IMR-90 (cell line): ENCODE measurements at regions of chr14 and their contacts with region 1.

Region 1: GRCh38 chr14:95993768-95994592 is 45.2 kb upstream of the C14orf132 start:
- DNase-seq: peak; percentile 53
- ATAC-seq: peak; percentile 82
- H3K4me3 ChIP-seq: no peak overlapping the region
- H3K27ac ChIP-seq: no peak overlapping the region
- H3K4me1 ChIP-seq: no peaks in the 10 kb centered on the region
- H3K27me3 ChIP-seq: peaks cover 18% of the 10 kb centered on the region
- CTCF ChIP-seq: peak; percentile 89
- POLR2A ChIP-seq: no peak
- RAD21 ChIP-seq: peak; percentile 88

Region 2: GRCh38 chr14:94689218-94689984 is 1304.6 kb before region 1 on chr14:
- CTCF ChIA-PET with region 1: no interaction called
- POLR2A ChIA-PET with region 1: no interaction called
- dilution Hi-C with region 1: no loop called
- in situ Hi-C with region 1: loop called (anchors 25 kb)
- intact Hi-C with region 1: loop called (anchors 2 kb)
- DNase-seq: peak; percentile 22
- ATAC-seq: peak; percentile 100
- H3K4me3 ChIP-seq: no peak overlapping the region; the same call in 1 of the 2 replicates
- H3K27ac ChIP-seq: no peak overlapping the region
- H3K4me1 ChIP-seq: peaks cover 2% of the 10 kb centered on the region; the same call in 1 of the 2 replicates
- H3K27me3 ChIP-seq: no peaks in the 10 kb centered on the region; the same call in 1 of the 2 replicates
- CTCF ChIP-seq: peak; percentile 92
- POLR2A ChIP-seq: no peak
- RAD21 ChIP-seq: peak; percentile 90

Region 3: DNA sequence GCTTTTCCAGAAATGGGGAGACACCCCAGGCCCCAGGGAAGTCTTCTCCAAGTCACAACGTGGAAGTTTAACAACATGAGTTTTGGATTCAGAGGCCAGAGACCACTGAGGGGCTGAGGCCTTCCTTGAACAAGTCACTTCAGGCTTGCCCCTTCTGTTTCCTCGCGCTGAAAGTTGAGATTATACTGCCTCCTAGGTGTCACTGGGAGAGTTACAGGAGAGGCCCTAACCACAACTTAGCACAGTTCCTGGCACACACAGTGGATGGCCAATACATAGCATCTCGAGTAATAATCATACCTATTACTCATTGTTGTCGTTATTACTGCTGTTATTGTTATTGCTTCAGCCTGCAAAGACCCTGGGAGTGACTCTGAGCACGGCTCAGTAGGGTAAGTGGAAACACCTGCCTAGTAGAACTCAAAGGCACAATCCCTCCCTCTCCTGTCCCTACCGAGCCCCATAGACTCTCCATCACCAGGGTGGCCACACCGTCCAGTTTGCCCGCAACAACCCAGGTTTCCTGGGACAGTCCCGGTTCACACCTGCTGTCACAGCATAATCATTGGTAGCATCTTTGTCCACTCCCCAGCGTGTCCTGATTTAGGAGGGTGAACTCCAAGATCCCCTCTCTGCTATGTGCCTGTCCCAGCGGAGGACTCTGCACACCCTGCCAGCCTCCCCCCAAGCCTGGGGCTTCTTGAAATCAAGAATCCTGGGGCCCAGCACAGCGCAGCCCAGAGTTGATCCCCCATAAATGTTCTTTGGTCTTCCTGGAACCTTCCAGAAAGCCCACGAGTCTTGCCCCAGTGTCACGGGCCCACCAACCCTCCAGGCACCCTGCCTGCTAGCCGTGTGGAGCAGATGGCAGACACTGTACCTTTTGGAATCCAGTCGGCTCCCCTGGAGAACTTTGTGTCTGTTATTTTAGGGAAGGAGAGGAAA is 562.5 kb before region 1 on chr14:
- CTCF ChIA-PET with region 1: no interaction called
- POLR2A ChIA-PET with region 1: no interaction called
- dilution Hi-C with region 1: no loop called
- in situ Hi-C with region 1: loop called (anchors 10 kb)
- intact Hi-C with region 1: loop called (anchors 5 kb)
- DNase-seq: peak; percentile 17
- ATAC-seq: no peak
- H3K4me3 ChIP-seq: no peak overlapping the region
- H3K27ac ChIP-seq: no peak overlapping the region
- H3K4me1 ChIP-seq: no peaks in the 10 kb centered on the region
- H3K27me3 ChIP-seq: no peaks in the 10 kb centered on the region
- CTCF ChIP-seq: peak; percentile 51
- POLR2A ChIP-seq: no peak
- RAD21 ChIP-seq: peak; percentile 37; the same call in 1 of the 2 replicates

Region 4: DNA sequence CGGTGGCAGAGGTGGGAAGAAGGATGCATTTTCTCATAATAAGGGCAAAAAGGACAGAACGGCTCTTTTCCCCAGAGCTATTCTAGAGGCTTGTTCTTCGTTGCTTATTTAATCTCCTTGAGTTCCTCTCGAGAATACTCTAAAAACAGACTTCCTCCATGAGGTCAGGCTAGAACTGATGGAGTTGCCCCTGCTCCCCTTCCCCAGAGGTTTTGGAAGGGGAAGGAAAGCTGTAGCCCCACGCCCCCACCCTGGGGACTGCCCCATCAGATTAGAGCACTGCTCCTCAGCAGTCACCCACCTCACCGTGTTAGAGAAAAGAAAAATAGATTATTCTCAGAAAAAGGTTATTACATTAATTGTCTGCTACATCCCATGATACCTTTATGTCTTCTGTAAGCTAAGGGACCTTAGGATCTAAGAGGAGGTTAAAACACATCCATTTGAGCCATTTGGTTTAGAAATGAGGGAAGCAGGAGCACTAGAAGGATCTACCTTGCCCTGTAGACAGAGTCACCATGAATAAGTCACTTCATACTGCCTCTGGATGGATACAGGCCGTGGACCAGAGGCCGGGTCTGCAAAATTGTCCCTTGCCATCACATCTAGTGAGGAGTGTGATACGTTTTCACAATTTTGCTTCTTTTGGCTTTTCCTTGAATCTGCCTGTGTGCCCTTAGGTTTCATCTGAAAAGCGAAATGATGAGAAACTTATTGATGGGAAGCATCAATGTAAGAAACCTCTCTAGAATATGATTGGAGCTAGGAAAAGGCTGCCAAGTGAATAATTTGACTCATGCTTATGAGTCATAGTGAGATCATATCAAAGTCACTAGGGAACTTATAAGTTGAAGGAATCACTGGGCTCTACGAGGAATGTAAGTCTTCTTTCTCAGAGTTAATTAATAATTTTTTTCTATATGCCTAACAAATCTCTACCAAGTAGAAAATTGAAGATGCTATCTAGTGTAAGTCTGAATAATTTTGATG is 448.5 kb before region 1 on chr14:
- CTCF ChIA-PET with region 1: no interaction called
- POLR2A ChIA-PET with region 1: no interaction called
- dilution Hi-C with region 1: no loop called
- in situ Hi-C with region 1: loop called (anchors 10 kb)
- intact Hi-C with region 1: no loop called
- DNase-seq: peak; percentile 97
- ATAC-seq: peak; percentile 61; the same call in 1 of the 2 replicates
- H3K4me3 ChIP-seq: no peak overlapping the region
- H3K27ac ChIP-seq: no peak overlapping the region
- H3K4me1 ChIP-seq: peaks cover 13% of the 10 kb centered on the region
- H3K27me3 ChIP-seq: no peaks in the 10 kb centered on the region
- CTCF ChIP-seq: no peak
- POLR2A ChIP-seq: no peak
- RAD21 ChIP-seq: no peak

Region 5: GRCh38 chr14:95609387-95609990 is 384.5 kb before region 1 on chr14:
- CTCF ChIA-PET with region 1: no interaction called
- POLR2A ChIA-PET with region 1: no interaction called
- dilution Hi-C with region 1: no loop called
- in situ Hi-C with region 1: no loop called
- intact Hi-C with region 1: loop called (anchors 1 kb)
- DNase-seq: peak; percentile 23
- ATAC-seq: peak; percentile 49
- H3K4me3 ChIP-seq: no peak overlapping the region
- H3K27ac ChIP-seq: no peak overlapping the region
- H3K4me1 ChIP-seq: no peaks in the 10 kb centered on the region
- H3K27me3 ChIP-seq: peaks cover 3% of the 10 kb centered on the region
- CTCF ChIP-seq: peak; percentile 46
- POLR2A ChIP-seq: no peak
- RAD21 ChIP-seq: peak; percentile 48

Region 6: GRCh38 chr14:96275177-96276112 is 281.5 kb after region 1 on chr14:
- CTCF ChIA-PET with region 1: interaction called, 3 read pairs
- POLR2A ChIA-PET with region 1: no interaction called
- dilution Hi-C with region 1: no loop called
- in situ Hi-C with region 1: no loop called
- intact Hi-C with region 1: loop called (anchors 1 kb)
- DNase-seq: peak; percentile 90
- ATAC-seq: peak; percentile 72
- H3K4me3 ChIP-seq: no peak overlapping the region
- H3K27ac ChIP-seq: peak overlapping the region; percentile 94
- H3K4me1 ChIP-seq: peaks cover 23% of the 10 kb centered on the region
- H3K27me3 ChIP-seq: no peaks in the 10 kb centered on the region
- CTCF ChIP-seq: peak; percentile 99
- POLR2A ChIP-seq: peak; percentile 61
- RAD21 ChIP-seq: peak; percentile 98